ENCODE measurements at regions of chr1 and their contacts with region 1.

Region 1: DNA sequence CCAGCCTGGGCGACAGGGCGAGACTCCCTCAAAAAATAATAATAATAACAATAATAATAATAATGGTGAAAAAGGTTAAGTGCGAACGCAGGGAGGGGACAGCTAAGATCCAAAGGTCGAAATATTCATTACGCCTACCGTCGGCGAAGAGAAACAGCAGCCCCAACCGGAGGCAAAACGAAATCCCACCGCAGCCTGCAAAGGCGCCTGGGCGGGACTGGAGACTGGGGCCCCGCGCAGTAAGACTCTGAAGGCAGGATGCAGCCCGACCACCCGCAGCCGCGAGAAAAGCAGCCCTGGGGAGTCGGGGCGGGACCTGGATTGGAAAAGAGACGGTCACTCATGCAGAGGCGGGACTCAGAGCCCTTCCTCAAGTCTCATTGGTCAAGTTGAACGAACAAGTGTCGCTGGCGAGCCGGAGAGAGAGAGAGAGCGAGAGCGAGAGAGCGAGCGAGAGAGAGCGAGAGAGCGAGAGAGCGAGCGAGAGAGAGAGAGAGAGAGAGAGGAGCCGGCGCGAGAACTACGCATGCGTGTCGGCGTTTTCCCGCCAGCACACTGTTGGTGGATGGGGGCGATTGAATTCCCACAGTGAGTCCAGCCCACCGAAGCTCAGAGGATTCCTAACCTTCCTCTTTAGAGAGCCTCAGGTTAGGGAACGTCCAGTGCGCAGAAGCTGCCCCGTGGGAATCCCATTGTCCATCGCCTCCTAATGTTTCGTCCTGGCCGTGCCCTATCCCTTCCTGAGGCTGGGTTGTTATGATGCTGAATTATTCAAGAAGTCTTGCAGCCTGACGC is 10.7 kb downstream of the ENTREP3 start:
- DNase-seq: peak; percentile 98
- ATAC-seq: peak; percentile 96
- H3K4me3 Mint-ChIP-seq: peak overlapping the region; percentile 80
- H3K27ac Mint-ChIP-seq: peak overlapping the region; percentile 90
- H3K4me1 Mint-ChIP-seq: peaks cover 44% of the 10 kb centered on the region
- H3K27me3 Mint-ChIP-seq: peaks cover 2% of the 10 kb centered on the region

Region 2: DNA sequence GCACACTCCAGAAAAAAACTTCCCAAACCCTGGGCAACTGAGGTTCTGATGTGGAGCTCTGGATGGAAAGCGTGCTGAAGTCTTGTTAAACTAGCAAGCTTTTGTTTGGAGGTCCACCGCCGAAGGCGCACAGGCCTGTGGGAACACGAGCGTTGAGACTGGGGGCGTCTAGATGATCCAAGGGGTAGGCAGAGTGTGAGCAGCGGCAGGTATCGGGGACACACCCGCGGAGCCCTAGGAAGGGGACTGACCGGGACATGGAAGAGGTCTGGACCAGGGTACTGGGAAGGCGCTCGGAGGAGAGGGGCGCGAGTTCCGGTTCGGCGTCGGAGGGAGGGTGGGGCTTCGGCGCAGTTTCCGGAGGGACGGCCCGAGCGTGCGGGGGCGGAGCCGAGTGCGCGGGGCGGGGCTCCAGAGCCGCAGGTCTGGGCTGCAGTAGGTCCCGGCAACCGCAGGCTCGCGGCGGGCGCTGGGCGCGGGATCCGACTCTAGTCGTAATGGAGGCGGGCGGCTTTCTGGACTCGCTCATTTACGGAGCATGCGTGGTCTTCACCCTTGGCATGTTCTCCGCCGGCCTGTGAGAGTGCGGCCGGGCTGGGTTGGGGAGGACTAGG is 109.0 kb before region 1 on chr1 and contains the start of gene SLC50A1:
- CTCF ChIA-PET with region 1: no interaction called
- POLR2A ChIA-PET with region 1: no interaction called
- intact Hi-C with region 1: loop called in 1 of 2 experiments (anchors 1 kb)
- DNase-seq: peak; percentile 97
- ATAC-seq: peak; percentile 78
- H3K4me3 Mint-ChIP-seq: peak within 1 kb of the TSS; percentile 96
- H3K27ac Mint-ChIP-seq: peak within 1 kb of the TSS; percentile 97
- H3K4me1 Mint-ChIP-seq: peaks cover 35% of the 10 kb centered on the region
- H3K27me3 Mint-ChIP-seq: no peaks in the 10 kb centered on the region
- total RNA-seq, gene SLC50A1: 50.2 to 58.0 TPM

Region 3: GRCh38 chr1:155208541-155209311 is 35.8 kb before region 1 on chr1 and contains the start of gene MTX1:
- CTCF ChIA-PET with region 1: interaction called, 15 read pairs
- POLR2A ChIA-PET with region 1: interaction called, 5 read pairs
- intact Hi-C with region 1: loop called (anchors 1 kb)
- DNase-seq: peak; percentile 93
- ATAC-seq: peak; percentile 87
- H3K4me3 Mint-ChIP-seq: peak within 1 kb of the TSS; percentile 89
- H3K27ac Mint-ChIP-seq: peak within 1 kb of the TSS; percentile 86
- H3K4me1 Mint-ChIP-seq: peaks cover 29% of the 10 kb centered on the region
- H3K27me3 Mint-ChIP-seq: no peaks in the 10 kb centered on the region
- total RNA-seq, gene MTX1: 52.8 to 52.9 TPM

Region 4: GRCh38 chr1:155218854-155219591 is 25.5 kb before region 1 on chr1:
- CTCF ChIA-PET with region 1: interaction called, 9 read pairs
- POLR2A ChIA-PET with region 1: no interaction called
- intact Hi-C with region 1: loop called in 1 of 2 experiments (anchors 1 kb)
- DNase-seq: peak; percentile 40
- ATAC-seq: peak; percentile 52
- H3K4me3 Mint-ChIP-seq: no peak overlapping the region
- H3K27ac Mint-ChIP-seq: peak overlapping the region; percentile 14
- H3K4me1 Mint-ChIP-seq: peaks cover 18% of the 10 kb centered on the region
- H3K27me3 Mint-ChIP-seq: no peaks in the 10 kb centered on the region

Region 5: GRCh38 chr1:155227261-155228095 is 17.1 kb before region 1 on chr1:
- CTCF ChIA-PET with region 1: interaction called, 9 read pairs
- POLR2A ChIA-PET with region 1: no interaction called
- intact Hi-C with region 1: loop called (anchors 1 kb)
- DNase-seq: peak; percentile 99
- ATAC-seq: peak; percentile 98
- H3K4me3 Mint-ChIP-seq: peak overlapping the region; percentile 96
- H3K27ac Mint-ChIP-seq: peak overlapping the region; percentile 97
- H3K4me1 Mint-ChIP-seq: peaks cover 27% of the 10 kb centered on the region
- H3K27me3 Mint-ChIP-seq: no peaks in the 10 kb centered on the region

Region 6: GRCh38 chr1:155261852-155262673 is 17.5 kb after region 1 on chr1 and contains the start of gene SCAMP3:
- CTCF ChIA-PET with region 1: interaction called, 47 read pairs
- POLR2A ChIA-PET with region 1: interaction called, 3 read pairs
- intact Hi-C with region 1: loop called in 1 of 2 experiments (anchors 1 kb)
- DNase-seq: peak; percentile 93
- ATAC-seq: peak; percentile 95
- H3K4me3 Mint-ChIP-seq: peak within 1 kb of the TSS; percentile 98
- H3K27ac Mint-ChIP-seq: peak within 1 kb of the TSS; percentile 91
- H3K4me1 Mint-ChIP-seq: peaks cover 27% of the 10 kb centered on the region
- H3K27me3 Mint-ChIP-seq: no peaks in the 10 kb centered on the region
- total RNA-seq, gene SCAMP3: 82.0 to 95.5 TPM